Ascending aorta (tissue), 2 donors: ENCODE measurements at regions of chr19 and their contacts with region 1.

Region 1: GRCh38 chr19:44113138-44113783 is at the start of gene ZNF225:
- DNase-seq: peak; percentile 92 to 99
- H3K4me3 ChIP-seq: peak within 1 kb of the TSS; percentile 79 to 84
- H3K27ac ChIP-seq: peak within 1 kb of the TSS; percentile 73 to 82
- H3K4me1 ChIP-seq: peaks cover 0 to 8% of the 10 kb centered on the region in 2 donors
- H3K27me3 ChIP-seq: no peaks in the 10 kb centered on the region
- CTCF ChIP-seq: no peak
- total RNA-seq, gene ZNF225: 3.3 TPM

Region 2: GRCh38 chr19:43950834-43951645 is 162.2 kb before region 1 on chr19 and contains the start of gene ZNF221:
- intact Hi-C with region 1: loop called (anchors 1 kb)
- DNase-seq: peak; percentile 58 to 94
- H3K4me3 ChIP-seq: peak within 1 kb of the TSS; percentile 72 to 88
- H3K27ac ChIP-seq: peak within 1 kb of the TSS; percentile 57 to 73
- H3K4me1 ChIP-seq: no peaks in the 10 kb centered on the region
- H3K27me3 ChIP-seq: no peaks in the 10 kb centered on the region
- CTCF ChIP-seq: peak; percentile 22 to 52 (median 47)
- total RNA-seq, gene ZNF221: 2.6 TPM

Region 3: GRCh38 chr19:44002566-44003460 is 110.4 kb before region 1 on chr19 and contains the start of gene ZNF230:
- intact Hi-C with region 1: loop called (anchors 1 kb)
- DNase-seq: peak; percentile 76 to 97
- H3K4me3 ChIP-seq: peak within 1 kb of the TSS; percentile 78 to 80
- H3K27ac ChIP-seq: peak within 1 kb of the TSS; percentile 53 to 69
- H3K4me1 ChIP-seq: peaks cover 0 to 9% of the 10 kb centered on the region in 2 donors
- H3K27me3 ChIP-seq: no peaks in the 10 kb centered on the region
- CTCF ChIP-seq: no peak
- total RNA-seq, gene ZNF230: 0.32 TPM

Region 4: DNA sequence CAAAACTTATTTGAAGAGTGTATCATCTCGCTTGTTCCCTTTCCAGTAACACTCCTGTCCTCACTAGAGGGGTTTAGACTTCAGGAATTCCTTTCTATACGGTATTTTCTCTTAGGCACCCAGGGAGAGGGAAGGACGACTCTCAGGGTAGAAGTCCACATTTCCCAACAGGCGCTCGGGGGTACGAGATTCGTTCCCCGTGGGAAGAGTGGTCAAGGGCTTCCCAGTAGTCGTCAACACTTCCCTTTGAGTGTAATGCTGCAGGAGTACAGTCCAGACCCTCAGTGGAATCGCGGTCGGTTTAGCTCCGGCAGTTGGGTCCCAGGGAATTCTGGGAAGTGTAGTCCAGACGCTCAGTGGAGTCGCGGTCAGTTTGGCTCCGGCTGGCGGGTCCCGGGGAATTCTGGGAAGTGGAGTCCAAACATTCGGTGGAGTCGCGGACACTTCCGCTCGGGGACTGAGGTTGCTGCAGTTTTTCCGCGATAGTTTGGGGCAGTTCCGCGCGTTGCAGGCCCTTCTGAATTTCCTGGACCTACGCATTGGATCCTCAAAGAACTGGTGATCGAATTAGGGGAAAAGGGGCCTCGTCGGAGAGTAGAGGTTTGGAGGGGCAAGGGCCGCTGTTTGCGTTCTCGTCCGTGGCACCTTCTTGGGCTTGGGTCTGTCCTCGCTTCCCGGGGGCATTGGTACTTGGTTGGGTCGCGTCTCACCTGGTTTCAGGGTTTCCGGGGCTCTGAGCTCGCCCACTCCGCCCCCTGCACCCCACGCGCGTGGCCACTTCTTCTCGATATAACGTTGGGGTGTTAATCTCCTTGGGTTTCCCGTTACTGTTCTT is 19.1 kb before region 1 on chr19 and contains the start of gene ZNF224:
- intact Hi-C with region 1: loop called (anchors 1 kb)
- DNase-seq: peak; percentile 66 to 95
- H3K4me3 ChIP-seq: peak within 1 kb of the TSS; percentile 80 to 86
- H3K27ac ChIP-seq: peak within 1 kb of the TSS; percentile 66 to 67
- H3K4me1 ChIP-seq: no peaks in the 10 kb centered on the region
- H3K27me3 ChIP-seq: no peaks in the 10 kb centered on the region
- CTCF ChIP-seq: no peak
- total RNA-seq, gene ZNF224: 119 TPM

Region 5: GRCh38 chr19:44151491-44151890 is 38.2 kb after region 1 on chr19:
- intact Hi-C with region 1: no loop called
- DNase-seq: no peak
- H3K4me3 ChIP-seq: no peak overlapping the region
- H3K27ac ChIP-seq: no peak overlapping the region
- H3K4me1 ChIP-seq: no peaks in the 10 kb centered on the region
- H3K27me3 ChIP-seq: no peaks in the 10 kb centered on the region
- CTCF ChIP-seq: no peak

Region 6: GRCh38 chr19:44164673-44165512 is 51.6 kb after region 1 on chr19 and contains the start of gene ZNF226:
- intact Hi-C with region 1: loop called (anchors 1 kb)
- DNase-seq: peak; percentile 82 to 96
- H3K4me3 ChIP-seq: peak within 1 kb of the TSS; percentile 63 to 80
- H3K27ac ChIP-seq: peak within 1 kb of the TSS; percentile 88 to 89
- H3K4me1 ChIP-seq: peaks cover 0 to 6% of the 10 kb centered on the region in 2 donors
- H3K27me3 ChIP-seq: no peaks in the 10 kb centered on the region
- CTCF ChIP-seq: no peak
- total RNA-seq, gene ZNF226: 4.7 TPM

Region 7: GRCh38 chr19:44304659-44305193 is 191.5 kb after region 1 on chr19 and contains the start of gene ZNF235:
- intact Hi-C with region 1: loop called (anchors 1 kb)
- DNase-seq: peak; percentile 74 to 96
- H3K4me3 ChIP-seq: peak within 1 kb of the TSS; percentile 81 to 83
- H3K27ac ChIP-seq: peak within 1 kb of the TSS; percentile 76 to 83
- H3K4me1 ChIP-seq: no peaks in the 10 kb centered on the region
- H3K27me3 ChIP-seq: no peaks in the 10 kb centered on the region
- CTCF ChIP-seq: no peak
- total RNA-seq, gene ZNF235: 6.6 TPM